ENCODE measurements at regions of chr1 and their contacts with region 1.

Region 1: DNA sequence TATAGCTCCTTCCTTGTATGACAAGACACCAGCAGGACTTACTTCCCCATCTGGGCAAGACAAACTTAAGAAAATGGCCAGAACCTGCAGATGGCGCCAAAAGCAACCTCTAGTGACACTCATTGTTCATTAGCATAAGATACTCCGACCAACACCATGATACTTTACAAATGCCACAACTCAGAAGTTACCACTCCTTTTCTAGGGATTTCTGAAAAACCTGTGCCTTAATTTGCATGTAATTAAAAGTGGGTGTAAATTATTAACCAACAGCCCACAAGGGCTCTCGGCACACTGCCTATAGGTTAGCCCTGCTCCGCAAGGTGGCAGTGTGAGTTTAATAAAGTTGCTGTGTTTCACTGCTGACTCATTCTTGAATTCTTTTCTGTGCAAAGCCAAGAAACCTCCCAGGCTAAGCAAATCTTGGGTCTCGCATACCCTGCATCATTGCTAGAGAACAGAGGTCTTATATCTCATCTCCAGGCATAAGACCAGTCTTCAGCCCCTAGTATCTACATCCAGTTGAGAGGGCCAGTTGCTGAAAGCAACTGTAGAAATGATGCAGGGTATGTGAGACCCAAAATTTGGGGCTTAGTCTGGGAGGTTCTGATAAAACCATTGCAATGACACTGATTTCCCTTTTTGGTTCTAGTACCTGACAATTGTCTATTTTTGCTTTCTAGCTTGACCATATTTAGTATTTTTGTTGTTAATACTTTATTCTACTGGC is 86.4 kb downstream of the FAF1 start:
- DNase-seq: peak; percentile 41
- H3K4me3 Mint-ChIP-seq: no peak overlapping the region
- H3K27ac Mint-ChIP-seq: no peak overlapping the region
- H3K4me1 Mint-ChIP-seq: peaks cover 6% of the 10 kb centered on the region
- H3K27me3 Mint-ChIP-seq: no peaks in the 10 kb centered on the region

Region 2: GRCh38 chr1:50893466-50893865 is 19.8 kb after region 1 on chr1:
- intact Hi-C with region 1: no loop called
- DNase-seq: no peak
- H3K4me3 Mint-ChIP-seq: no peak overlapping the region
- H3K27ac Mint-ChIP-seq: no peak overlapping the region
- H3K4me1 Mint-ChIP-seq: no peaks in the 10 kb centered on the region
- H3K27me3 Mint-ChIP-seq: no peaks in the 10 kb centered on the region

Region 3: GRCh38 chr1:50959913-50960844 is 86.6 kb after region 1 on chr1 and contains the start of gene FAF1:
- intact Hi-C with region 1: loop called (anchors 2 kb)
- DNase-seq: peak; percentile 98
- H3K4me3 Mint-ChIP-seq: peak within 1 kb of the TSS; percentile 94
- H3K27ac Mint-ChIP-seq: peak within 1 kb of the TSS; percentile 98
- H3K4me1 Mint-ChIP-seq: peaks cover 23% of the 10 kb centered on the region
- H3K27me3 Mint-ChIP-seq: peaks cover 8% of the 10 kb centered on the region
- total RNA-seq, gene FAF1: 58.8 and 62.0 TPM in 2 replicates

Region 4: DNA sequence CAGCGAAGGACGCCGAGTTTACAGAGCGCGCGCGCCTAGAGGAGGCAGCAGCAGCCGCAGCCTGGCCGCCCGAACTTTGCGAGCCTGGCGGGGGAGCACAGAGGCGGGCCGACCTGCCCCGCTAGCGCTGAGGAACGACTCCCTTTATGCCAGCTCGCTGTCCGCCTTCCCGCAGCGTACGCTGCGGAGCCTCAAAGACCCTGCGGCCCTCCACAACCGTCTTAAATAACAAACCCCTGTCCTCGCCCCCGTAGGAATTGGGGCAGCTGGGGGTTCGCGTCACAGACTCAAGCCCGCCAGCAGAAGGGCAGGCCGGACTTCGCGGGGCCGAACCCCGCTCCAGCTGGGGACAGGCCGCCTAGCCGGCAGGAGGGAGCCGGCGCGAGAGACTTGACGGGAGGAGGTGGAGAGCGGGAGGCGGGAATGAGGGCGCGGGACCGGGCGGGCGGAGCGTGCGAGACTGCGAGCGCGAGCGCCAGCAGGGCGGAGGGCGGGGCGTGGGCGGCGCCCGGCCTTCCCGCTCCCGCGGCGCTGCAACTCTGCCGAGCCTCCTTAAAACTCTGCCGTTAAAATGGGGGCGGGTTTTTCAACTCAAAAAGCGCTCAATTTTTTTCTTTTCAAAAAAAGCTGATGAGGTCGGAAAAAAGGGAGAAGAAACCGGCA is 94.7 kb after region 1 on chr1:
- intact Hi-C with region 1: loop called (anchors 2 kb)
- DNase-seq: peak; percentile 82
- H3K4me3 Mint-ChIP-seq: peak overlapping the region; percentile 99
- H3K27ac Mint-ChIP-seq: peak overlapping the region; percentile 98
- H3K4me1 Mint-ChIP-seq: peaks cover 39% of the 10 kb centered on the region
- H3K27me3 Mint-ChIP-seq: peaks cover 10% of the 10 kb centered on the region

Region 5: GRCh38 chr1:51192213-51192843 is 318.7 kb after region 1 on chr1:
- intact Hi-C with region 1: loop called (anchors 1 kb)
- DNase-seq: peak; percentile 19
- H3K4me3 Mint-ChIP-seq: no peak overlapping the region
- H3K27ac Mint-ChIP-seq: no peak overlapping the region
- H3K4me1 Mint-ChIP-seq: no peaks in the 10 kb centered on the region
- H3K27me3 Mint-ChIP-seq: peaks cover 17% of the 10 kb centered on the region

Region 6: DNA sequence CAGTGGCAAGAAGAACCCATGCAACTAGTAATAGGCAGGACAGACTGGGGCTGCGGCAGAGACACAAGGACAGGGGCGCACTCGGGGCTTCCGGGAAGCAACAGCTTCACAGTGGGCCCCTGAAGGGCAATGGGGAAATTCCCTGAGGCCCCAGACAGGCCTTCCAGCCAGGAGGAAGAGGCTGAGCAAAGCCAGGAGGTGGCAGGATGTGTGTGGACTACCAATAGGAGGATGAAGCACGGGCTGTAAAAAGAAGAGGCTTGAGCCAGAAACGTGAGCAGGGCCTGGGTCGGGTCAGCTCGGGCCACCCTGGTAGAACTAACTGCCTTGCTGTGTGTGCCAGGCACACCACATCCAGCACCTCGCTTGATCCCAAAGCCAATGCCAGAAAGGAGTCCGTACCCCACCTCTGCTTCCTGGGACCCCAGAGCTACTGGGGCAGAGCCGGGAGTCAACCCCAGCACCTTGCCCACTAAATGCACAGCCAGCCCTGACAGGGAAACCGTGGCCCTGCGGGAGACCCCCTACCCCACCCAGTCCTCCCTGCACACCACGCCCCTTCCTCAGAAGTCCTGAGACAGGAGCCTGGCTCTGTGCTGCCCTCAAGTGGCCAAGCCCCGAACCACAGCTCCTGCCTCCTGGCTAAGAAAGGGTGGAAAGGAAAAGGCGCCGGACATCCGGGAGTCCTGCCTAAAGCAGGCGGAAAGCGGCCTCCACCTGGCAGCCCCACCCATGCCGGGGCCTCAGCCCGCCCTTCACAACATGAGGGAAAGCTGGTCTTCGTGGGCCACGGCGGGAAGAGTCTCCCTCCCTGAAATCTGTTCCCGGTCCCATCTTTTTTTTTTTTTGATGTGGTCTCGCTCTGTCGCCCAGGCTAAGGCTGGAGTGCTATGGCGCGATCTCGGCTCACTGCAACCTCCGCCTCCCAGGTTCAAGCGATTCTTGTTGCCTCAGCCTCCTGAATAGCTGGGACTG is 423.0 kb after region 1 on chr1:
- intact Hi-C with region 1: loop called (anchors 2 kb)
- DNase-seq: peak; percentile 69
- H3K4me3 Mint-ChIP-seq: peak overlapping the region; percentile 69
- H3K27ac Mint-ChIP-seq: peak overlapping the region; percentile 76
- H3K4me1 Mint-ChIP-seq: peaks cover 17% of the 10 kb centered on the region
- H3K27me3 Mint-ChIP-seq: peaks cover 2% of the 10 kb centered on the region

Measured in activated T-helper 1 cell treated with anti-CD3 and anti-CD28 coated beads, Interleukin-12 subunit alpha, Interleukin-12 subunit beta, Interleukin-2, Interleukin-4 antibody, amounts not matched to agents 30 ng/mL and 10 ng/mL and 1 ng/mL, durations not matched to agents 14 hours and 24 hours and 36 hours (primary cell).